IMR-90 (cell line): ENCODE measurements at regions of chr7 and their contacts with region 1.

Region 1: GRCh38 chr7:120805636-120806388 is 52.1 kb downstream of the TSPAN12 start:
- DNase-seq: peak; percentile 61
- ATAC-seq: peak; percentile 85
- H3K4me3 ChIP-seq: no peak overlapping the region
- H3K27ac ChIP-seq: no peak overlapping the region
- H3K4me1 ChIP-seq: 0 out of 2 replicates have a peak, but pooled peaks cover 2% of the 10 kb centered on the region
- H3K27me3 ChIP-seq: no peaks in the 10 kb centered on the region
- CTCF ChIP-seq: peak; percentile 74
- POLR2A ChIP-seq: no peak
- RAD21 ChIP-seq: peak; percentile 70

Region 2: DNA sequence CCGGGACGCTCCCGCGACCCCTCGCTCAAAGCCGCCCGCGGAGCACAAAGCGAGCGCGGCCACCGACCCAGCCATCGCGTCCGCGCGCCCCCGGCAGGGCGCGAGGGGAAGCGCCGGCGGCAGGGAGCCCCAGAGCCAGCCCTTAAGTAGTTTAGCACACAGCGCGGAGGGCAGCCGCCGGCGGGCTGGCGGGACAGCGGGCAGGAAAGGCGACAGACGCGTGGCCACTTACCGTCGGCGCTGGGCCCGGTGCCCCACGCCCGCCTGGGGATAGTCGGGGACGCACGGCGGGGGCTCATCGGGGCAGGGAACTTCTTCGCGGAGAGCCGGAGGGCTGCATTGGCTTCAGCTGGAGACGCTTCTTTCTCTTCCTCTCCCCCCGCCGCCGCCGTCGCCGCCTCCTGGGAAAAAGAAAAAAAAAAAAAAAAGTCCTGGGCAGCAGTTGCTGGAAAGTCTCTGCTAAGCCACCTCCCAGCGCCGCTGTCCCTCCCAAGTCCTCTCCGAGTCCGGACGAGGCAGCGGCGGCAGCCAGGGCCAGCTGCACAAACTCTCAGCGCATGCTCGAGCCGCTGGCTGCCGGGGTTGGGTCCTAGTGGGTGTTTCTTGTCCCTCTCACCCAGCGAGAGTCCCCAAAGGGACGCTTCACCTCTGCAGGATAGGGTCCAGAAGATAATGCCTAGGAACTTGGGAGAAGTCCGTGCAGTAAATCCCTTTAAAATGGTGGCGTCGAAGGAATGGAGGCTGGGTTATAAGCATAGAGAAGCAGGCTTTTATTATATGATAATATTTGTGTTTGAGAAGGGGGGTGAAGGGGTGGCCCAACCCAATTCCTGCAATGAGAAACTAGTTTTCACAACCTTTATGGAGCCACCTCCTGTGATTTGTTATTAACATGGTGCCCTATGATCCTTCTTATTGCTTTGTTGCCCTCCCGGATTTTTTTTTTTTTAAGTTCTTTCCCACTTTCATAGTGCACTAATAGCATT is 52.1 kb after region 1 on chr7 and contains the start of gene TSPAN12:
- CTCF ChIA-PET with region 1: interaction called, 3 read pairs
- POLR2A ChIA-PET with region 1: no interaction called
- dilution Hi-C with region 1: no loop called
- in situ Hi-C with region 1: no loop called
- intact Hi-C with region 1: loop called (anchors 1 kb)
- DNase-seq: peak; percentile 54
- ATAC-seq: peak; percentile 96
- H3K4me3 ChIP-seq: peak within 1 kb of the TSS; percentile 78
- H3K27ac ChIP-seq: peak within 1 kb of the TSS; percentile 79
- H3K4me1 ChIP-seq: no peaks in the 10 kb centered on the region
- H3K27me3 ChIP-seq: peaks cover 1% of the 10 kb centered on the region
- CTCF ChIP-seq: peak; percentile 65
- POLR2A ChIP-seq: no peak
- RAD21 ChIP-seq: peak; percentile 35
- total RNA-seq, gene TSPAN12: 0.72 and 1.1 TPM in 2 replicates

Region 3: GRCh38 chr7:120941064-120941463 is 135.3 kb after region 1 on chr7:
- CTCF ChIA-PET with region 1: no interaction called
- POLR2A ChIA-PET with region 1: no interaction called
- dilution Hi-C with region 1: no loop called
- in situ Hi-C with region 1: no loop called
- intact Hi-C with region 1: loop called (anchors 1 kb)
- DNase-seq: no peak
- ATAC-seq: peak; percentile 57; the same call in 1 of the 2 replicates
- H3K4me3 ChIP-seq: no peak overlapping the region
- H3K27ac ChIP-seq: no peak overlapping the region
- H3K4me1 ChIP-seq: no peaks in the 10 kb centered on the region
- H3K27me3 ChIP-seq: no peaks in the 10 kb centered on the region
- CTCF ChIP-seq: peak; percentile 40
- POLR2A ChIP-seq: no peak
- RAD21 ChIP-seq: peak; percentile 32; the same call in 1 of the 2 replicates

Region 4: DNA sequence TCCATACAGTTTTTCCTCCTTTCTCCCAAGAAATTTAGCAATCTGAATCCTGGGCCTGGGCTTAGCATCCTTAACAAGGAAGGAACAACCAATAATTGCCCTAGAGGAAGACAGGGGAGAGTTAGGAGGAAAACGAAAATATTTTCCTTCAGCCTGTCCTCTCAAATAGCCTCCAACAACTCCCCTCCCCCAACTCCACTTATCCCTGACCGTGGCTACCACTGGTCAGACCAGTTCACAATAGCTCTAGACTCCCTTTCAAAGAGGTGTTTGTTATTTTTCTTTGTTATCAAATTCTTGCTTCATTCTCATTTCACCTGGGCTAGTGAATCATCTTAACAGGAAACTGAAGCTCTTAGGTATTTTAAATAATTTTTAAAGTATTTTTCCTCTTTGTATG is 296.8 kb after region 1 on chr7:
- CTCF ChIA-PET with region 1: no interaction called
- POLR2A ChIA-PET with region 1: no interaction called
- dilution Hi-C with region 1: no loop called
- in situ Hi-C with region 1: loop called (anchors 5 kb)
- intact Hi-C with region 1: no loop called
- DNase-seq: no peak
- ATAC-seq: no peak
- H3K4me3 ChIP-seq: no peak overlapping the region
- H3K27ac ChIP-seq: no peak overlapping the region
- H3K4me1 ChIP-seq: no peaks in the 10 kb centered on the region
- H3K27me3 ChIP-seq: no peaks in the 10 kb centered on the region
- CTCF ChIP-seq: no peak
- POLR2A ChIP-seq: no peak
- RAD21 ChIP-seq: no peak

Region 5: GRCh38 chr7:121302214-121302745 is 496.5 kb after region 1 on chr7:
- CTCF ChIA-PET with region 1: no interaction called
- POLR2A ChIA-PET with region 1: no interaction called
- dilution Hi-C with region 1: no loop called
- in situ Hi-C with region 1: no loop called
- intact Hi-C with region 1: no loop called
- DNase-seq: peak; percentile 89
- ATAC-seq: peak; percentile 81
- H3K4me3 ChIP-seq: no peak overlapping the region
- H3K27ac ChIP-seq: peak overlapping the region; percentile 84; the same call in 1 of the 2 replicates
- H3K4me1 ChIP-seq: peaks cover 12% of the 10 kb centered on the region
- H3K27me3 ChIP-seq: no peaks in the 10 kb centered on the region
- CTCF ChIP-seq: no peak
- POLR2A ChIP-seq: peak; percentile 58; the same call in 1 of the 2 replicates
- RAD21 ChIP-seq: no peak

Region 6: DNA sequence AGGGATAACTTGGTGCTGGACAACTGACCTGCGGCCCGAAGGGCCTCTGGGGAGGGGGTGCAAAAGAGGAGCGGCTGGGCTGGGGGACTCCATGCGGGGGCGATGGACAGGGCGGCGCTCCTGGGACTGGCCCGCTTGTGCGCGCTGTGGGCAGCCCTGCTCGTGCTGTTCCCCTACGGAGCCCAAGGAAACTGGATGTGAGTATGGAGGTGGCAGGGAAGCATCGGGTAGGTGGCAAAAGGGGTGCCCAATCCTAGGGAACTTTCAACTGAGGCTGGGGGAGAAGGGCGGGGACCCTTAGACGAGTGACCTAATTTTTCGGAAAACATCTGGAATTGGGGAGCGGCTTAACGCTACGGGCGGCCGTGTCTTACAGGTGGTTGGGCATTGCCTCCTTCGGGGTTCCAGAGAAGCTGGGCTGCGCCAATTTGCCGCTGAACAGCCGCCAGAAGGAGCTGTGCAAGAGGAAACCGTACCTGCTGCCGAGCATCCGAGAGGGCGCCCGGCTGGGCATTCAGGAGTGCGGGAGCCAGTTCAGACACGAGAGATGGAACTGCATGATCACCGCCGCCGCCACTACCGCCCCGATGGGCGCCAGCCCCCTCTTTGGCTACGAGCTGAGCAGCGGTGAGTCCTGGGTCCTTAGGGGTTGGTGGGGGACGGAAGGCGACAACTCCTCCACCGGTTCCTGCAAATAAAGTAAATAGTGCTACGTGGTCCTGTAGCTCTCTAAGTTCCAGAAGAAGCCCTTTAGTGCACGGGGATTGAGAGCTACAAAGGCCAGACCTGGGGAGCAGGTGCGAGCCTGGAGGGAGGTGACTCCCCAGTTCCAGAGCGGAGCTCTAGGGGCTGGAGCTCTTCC is 523.6 kb after region 1 on chr7:
- CTCF ChIA-PET with region 1: no interaction called
- POLR2A ChIA-PET with region 1: no interaction called
- dilution Hi-C with region 1: no loop called
- in situ Hi-C with region 1: no loop called
- intact Hi-C with region 1: loop called (anchors 10 kb)
- DNase-seq: no peak
- ATAC-seq: peak; percentile 57
- H3K4me3 ChIP-seq: peak overlapping the region; percentile 63
- H3K27ac ChIP-seq: no peak overlapping the region
- H3K4me1 ChIP-seq: no peaks in the 10 kb centered on the region
- H3K27me3 ChIP-seq: peaks cover 21% of the 10 kb centered on the region
- CTCF ChIP-seq: no peak; the same call in 1 of the 2 replicates
- POLR2A ChIP-seq: no peak
- RAD21 ChIP-seq: no peak